Left colon (tissue), 2 donors: ENCODE measurements at regions of chr13 and their contacts with region 1.

Region 1: DNA sequence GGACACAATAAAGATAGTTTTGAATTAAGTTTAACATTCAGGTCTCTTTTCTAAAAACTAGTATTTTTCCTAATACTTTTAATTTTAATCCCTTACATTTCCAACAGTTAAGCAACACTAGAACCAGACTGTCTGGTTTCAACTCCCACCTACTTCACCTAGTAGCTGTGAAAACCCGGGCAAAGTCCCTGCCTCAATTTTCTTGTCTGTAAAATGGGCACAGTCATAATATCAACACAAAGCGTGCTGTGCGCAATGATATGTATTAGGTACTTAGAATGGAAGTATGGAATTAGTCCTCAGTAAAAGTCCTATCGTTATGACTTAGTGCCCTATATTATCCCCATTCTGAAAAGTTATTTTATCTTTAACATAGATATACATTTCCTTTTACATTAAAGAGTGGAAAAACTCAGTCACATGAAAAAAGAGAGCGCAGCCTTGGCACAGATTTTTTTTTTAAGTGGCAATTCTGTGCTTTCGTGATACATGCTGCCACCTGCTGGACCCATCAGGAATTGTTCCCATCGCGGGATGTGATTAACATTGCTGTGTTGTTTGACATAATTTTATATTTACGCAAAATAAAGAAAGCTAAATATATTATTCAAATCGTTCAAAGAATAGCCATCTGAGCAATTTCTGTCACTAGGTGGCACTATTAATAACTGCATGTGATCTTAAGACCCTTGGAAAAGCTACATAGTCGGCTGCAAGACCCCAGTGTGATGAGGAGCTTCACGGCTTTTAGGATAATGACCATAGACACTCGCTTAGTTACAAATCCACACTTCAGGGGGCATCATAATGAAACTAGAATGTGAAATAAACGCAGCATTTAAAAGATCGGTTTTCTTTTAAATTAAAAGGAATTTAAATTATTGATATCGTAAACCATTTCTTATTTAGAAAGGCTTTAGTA is 59.9 kb downstream of the LIG4 start:
- DNase-seq: peak in 1 of 2 donors; percentile 73
- ATAC-seq: peak; percentile 54

Region 2: DNA sequence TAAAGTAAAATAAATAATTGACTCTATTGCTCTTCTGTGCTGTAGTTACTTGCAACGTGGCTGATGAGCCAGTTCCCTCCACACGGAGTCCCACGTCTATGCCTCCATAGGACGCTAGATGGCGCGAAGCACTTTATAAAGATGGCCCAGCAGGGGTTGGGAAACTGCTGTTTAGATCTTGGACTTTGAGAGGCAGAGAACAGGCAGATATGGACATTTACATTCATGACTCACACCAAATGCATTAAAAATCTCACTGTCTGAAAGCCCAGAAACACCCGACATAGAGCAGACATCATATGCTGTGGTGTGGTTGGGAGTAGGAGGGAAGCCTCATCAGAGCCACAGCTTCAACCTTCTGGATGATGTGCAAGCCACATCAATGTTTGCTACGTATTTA is 944.4 kb before region 1 on chr13:
- intact Hi-C with region 1: loop called in 1 of 2 experiments (anchors 10 kb)
- DNase-seq: peak; percentile 57 to 77
- ATAC-seq: peak; percentile 98